Activated naive CD4-positive, alpha-beta T cell treated with anti-CD3 and anti-CD28 coated beads for 36 hours (primary cell): ENCODE measurements at regions of chr2 and their contacts with region 1.

Region 1: GRCh38 chr2:56183643-56184499 is at the start of gene CCDC85A:
- DNase-seq: peak; percentile 76
- H3K4me3 Mint-ChIP-seq: peak within 1 kb of the TSS; percentile 38
- H3K27ac Mint-ChIP-seq: no peak within 1 kb of the TSS
- H3K4me1 Mint-ChIP-seq: peaks cover 3% of the 10 kb centered on the region
- H3K27me3 Mint-ChIP-seq: peaks cover 61% of the 10 kb centered on the region
- total RNA-seq, gene CCDC85A: not detected

Region 2: DNA sequence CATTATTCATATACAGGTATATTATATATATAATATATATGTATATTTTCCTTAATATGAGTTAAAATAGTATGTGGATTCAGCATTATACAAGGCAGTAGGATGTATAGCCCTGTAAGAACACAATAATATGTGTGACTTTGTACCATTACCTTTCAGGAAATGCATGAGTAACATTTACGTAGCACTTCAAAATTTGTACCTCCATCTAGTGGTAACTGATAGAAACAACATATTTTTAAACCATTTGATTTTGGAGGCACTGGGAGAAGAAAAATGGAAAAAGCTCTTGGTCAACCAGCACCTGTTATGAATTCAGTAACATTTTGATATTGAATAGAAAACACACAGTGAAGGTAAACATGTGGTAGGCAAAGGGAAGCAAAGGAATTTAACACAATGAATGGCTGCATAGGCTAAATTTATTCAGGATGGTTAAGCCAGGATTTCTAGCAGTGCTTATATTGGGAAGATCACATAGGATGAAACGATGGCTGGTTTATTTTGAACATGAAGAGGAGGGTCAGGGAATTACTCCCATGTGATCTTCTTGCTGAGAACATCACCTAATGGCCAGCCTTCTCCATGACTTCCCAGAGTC is 565.4 kb after region 1 on chr2:
- CTCF ChIA-PET with region 1: interaction called, 3 read pairs
- intact Hi-C with region 1: loop called (anchors 1 kb)
- DNase-seq: no peak
- H3K4me3 Mint-ChIP-seq: no peak overlapping the region
- H3K27ac Mint-ChIP-seq: no peak overlapping the region
- H3K4me1 Mint-ChIP-seq: no peaks in the 10 kb centered on the region
- H3K27me3 Mint-ChIP-seq: no peaks in the 10 kb centered on the region

Region 3: DNA sequence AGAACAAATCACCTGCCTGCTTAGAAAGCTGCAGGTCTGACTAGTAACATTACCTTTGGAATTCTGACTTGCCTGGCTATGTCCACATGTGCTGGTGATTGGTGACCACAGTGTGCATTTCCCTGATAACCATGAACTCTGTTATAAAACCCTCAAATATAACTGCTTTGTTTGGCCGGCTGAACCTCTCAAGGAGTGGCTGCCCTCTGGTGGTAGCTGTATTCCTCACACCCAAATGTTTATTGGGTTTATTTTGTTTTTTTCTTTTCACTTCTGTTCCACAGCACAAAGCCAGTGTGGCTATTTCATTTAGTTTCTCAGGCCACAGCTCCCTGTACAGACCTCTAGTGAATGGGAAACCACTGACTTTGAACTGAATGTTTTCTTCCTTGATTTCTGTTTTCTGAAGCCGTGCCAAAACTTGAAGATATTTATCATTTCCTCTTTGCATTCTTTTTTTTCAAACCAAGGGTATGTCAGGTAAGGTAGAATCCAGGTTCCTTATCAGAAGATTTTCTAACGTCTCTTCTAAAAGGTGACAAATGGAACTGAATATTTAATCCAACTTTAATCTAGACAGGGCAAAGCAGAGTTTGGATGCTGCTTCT is 1313.7 kb after region 1 on chr2:
- CTCF ChIA-PET with region 1: interaction called, 4 read pairs
- intact Hi-C with region 1: loop called (anchors 1 kb)
- DNase-seq: peak; percentile 55
- H3K4me3 Mint-ChIP-seq: no peak overlapping the region
- H3K27ac Mint-ChIP-seq: no peak overlapping the region
- H3K4me1 Mint-ChIP-seq: no peaks in the 10 kb centered on the region
- H3K27me3 Mint-ChIP-seq: peaks cover 3% of the 10 kb centered on the region

Region 4: DNA sequence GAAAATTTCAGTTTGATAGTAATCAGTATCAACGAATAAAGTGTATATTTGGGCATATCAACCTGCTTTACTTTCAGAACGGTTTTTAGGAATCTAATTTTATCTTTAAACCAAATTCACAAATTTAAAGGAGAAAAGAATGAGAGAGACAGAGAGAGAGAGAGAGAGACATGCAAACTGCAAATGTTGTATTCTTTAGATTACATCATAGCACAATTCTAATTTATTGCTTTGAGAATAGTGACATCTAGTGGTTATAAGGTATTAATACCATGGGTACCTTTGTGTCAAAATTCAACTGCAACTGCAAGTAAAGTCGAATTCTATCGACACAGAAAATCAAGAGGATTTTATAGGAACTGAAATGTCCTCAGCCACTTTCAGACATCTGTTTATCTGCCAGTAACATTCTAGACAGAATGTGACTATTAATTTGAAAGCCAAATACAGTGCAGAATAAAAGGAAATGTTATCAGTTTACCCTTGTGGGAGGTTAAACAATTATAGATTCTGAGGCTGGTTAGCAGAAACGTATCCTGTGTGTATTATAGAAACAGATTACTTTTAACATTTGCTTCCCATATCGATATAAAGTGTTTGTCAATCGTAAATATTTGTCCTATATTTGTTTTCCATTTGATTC is 1332.9 kb after region 1 on chr2:
- CTCF ChIA-PET with region 1: interaction called, 6 read pairs
- intact Hi-C with region 1: loop called (anchors 1 kb)
- DNase-seq: no peak
- H3K4me3 Mint-ChIP-seq: no peak overlapping the region
- H3K27ac Mint-ChIP-seq: no peak overlapping the region
- H3K4me1 Mint-ChIP-seq: no peaks in the 10 kb centered on the region
- H3K27me3 Mint-ChIP-seq: no peaks in the 10 kb centered on the region